ENCODE measurements at regions of chr13 and their contacts with region 1.

Region 1: GRCh38 chr13:27826379-27827353 is 34.4 kb downstream of the GSX1 start:
- DNase-seq: peak; percentile 41 to 62
- ATAC-seq: peak; percentile 85 to 87
- H3K4me3 ChIP-seq: peak overlapping the region in 2 of 4 donors; percentile 22 to 46
- H3K27ac ChIP-seq: no peak overlapping the region
- H3K4me1 ChIP-seq: no peaks in the 10 kb centered on the region
- H3K27me3 ChIP-seq: peaks cover 32 to 41% (median 41%) of the 10 kb centered on the region in 3 donors
- CTCF ChIP-seq: peak; percentile 83 to 92 (median 89)
- POLR2A ChIP-seq: no peak

Region 2: GRCh38 chr13:26985285-26985878 is 841.3 kb before region 1 on chr13:
- in situ Hi-C with region 1: loop called in 2 of 4 experiments (anchors 10 to 25 kb)
- intact Hi-C with region 1: no loop called
- DNase-seq: peak; percentile 36 to 54
- ATAC-seq: peak; percentile 80 to 91
- H3K4me3 ChIP-seq: no peak overlapping the region
- H3K27ac ChIP-seq: no peak overlapping the region
- H3K4me1 ChIP-seq: no peaks in the 10 kb centered on the region
- H3K27me3 ChIP-seq: peaks cover 0 to 4% (median 0%) of the 10 kb centered on the region in 3 donors
- CTCF ChIP-seq: peak; percentile 76 to 84 (median 78)
- POLR2A ChIP-seq: no peak

Region 3: GRCh38 chr13:27367570-27367969 is 459.1 kb before region 1 on chr13:
- in situ Hi-C with region 1: loop called in 3 of 4 experiments (anchors 5 to 10 kb)
- intact Hi-C with region 1: loop called (anchors 1 kb)
- DNase-seq: no peak
- ATAC-seq: no peak
- H3K4me3 ChIP-seq: no peak overlapping the region
- H3K27ac ChIP-seq: no peak overlapping the region
- H3K4me1 ChIP-seq: no peaks in the 10 kb centered on the region
- H3K27me3 ChIP-seq: peaks cover 0 to 7% (median 6%) of the 10 kb centered on the region in 3 donors
- CTCF ChIP-seq: no peak
- POLR2A ChIP-seq: no peak

Region 4: DNA sequence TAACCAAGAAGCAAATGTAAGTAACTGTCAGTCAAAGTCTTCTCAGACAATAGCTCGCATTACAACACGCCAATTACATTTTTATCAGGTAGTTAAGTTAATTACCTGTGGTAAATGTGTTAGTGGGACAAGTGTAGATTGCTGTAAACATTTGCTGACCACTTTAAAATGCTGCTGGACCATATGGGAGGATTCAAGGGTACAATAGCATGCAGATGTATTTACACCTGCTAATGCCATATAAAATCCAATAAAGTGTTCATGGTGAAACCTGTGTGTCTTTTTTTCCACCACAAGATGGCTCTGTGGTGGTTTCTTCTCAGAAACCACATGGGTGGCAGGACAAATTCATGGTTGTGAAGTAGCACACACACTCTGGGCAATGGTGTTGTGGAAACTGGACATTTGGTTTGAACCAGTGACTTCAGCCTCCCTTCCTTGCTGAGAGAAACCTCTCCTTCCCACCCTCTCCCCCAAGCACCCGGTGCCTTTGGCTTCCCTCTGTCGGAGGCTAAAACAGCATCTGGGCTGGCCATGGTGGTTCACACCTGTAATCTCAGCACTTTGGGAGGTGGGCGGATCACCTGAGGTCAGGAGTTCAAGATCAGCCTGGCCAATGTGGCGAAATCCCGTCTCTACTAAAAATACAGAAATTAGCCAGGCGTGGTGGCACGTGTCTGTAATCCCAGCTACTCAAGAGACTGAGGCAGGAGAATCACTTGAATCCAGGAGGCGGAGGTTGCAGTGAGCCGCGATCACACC is 420.3 kb before region 1 on chr13:
- in situ Hi-C with region 1: no loop called
- intact Hi-C with region 1: loop called (anchors 1 kb)
- DNase-seq: no peak
- ATAC-seq: peak; percentile 77 to 80
- H3K4me3 ChIP-seq: no peak overlapping the region
- H3K27ac ChIP-seq: no peak overlapping the region
- H3K4me1 ChIP-seq: peaks cover 6 to 10% of the 10 kb centered on the region in 2 donors
- H3K27me3 ChIP-seq: no peaks in the 10 kb centered on the region
- CTCF ChIP-seq: peak; percentile 39 to 70 (median 61)
- POLR2A ChIP-seq: no peak

Region 5: GRCh38 chr13:27556109-27556508 is 270.6 kb before region 1 on chr13:
- in situ Hi-C with region 1: loop called in 1 of 4 experiments (anchors 25 kb)
- intact Hi-C with region 1: loop called (anchors 1 kb)
- DNase-seq: peak in 1 of 2 donors; percentile 17
- ATAC-seq: peak in 1 of 2 donors; percentile 46
- H3K4me3 ChIP-seq: no peak overlapping the region
- H3K27ac ChIP-seq: no peak overlapping the region
- H3K4me1 ChIP-seq: no peaks in the 10 kb centered on the region
- H3K27me3 ChIP-seq: no peaks in the 10 kb centered on the region
- CTCF ChIP-seq: peak in 2 of 5 experiments; percentile 29 to 35
- POLR2A ChIP-seq: no peak

Region 6: DNA sequence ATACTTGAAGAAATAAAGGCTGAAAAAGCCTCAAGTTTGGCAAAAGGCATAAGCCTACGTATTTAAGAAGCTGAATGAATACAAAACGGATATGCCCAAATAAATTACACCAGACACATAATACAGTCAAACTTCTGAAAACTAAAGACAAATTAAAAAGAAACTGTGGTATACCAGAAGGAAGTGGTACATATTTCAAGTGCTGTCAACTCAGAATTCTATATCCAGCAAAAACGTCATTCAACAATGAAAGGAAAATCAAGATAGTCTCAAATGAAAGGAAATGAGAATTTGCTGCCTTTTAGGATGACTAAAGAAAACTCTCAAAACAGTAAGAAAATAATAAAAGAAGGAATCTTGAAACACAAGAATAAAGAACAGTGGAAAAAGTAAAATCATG is 135.5 kb before region 1 on chr13:
- in situ Hi-C with region 1: no loop called
- intact Hi-C with region 1: no loop called
- DNase-seq: no peak
- ATAC-seq: no peak
- H3K4me3 ChIP-seq: no peak overlapping the region
- H3K27ac ChIP-seq: no peak overlapping the region
- H3K4me1 ChIP-seq: no peaks in the 10 kb centered on the region
- H3K27me3 ChIP-seq: no peaks in the 10 kb centered on the region
- CTCF ChIP-seq: no peak
- POLR2A ChIP-seq: no peak

Region 7: GRCh38 chr13:27997904-27998522 is 171.3 kb after region 1 on chr13:
- in situ Hi-C with region 1: loop called in 1 of 4 experiments (anchors 25 kb)
- intact Hi-C with region 1: no loop called
- DNase-seq: no peak
- ATAC-seq: no peak
- H3K4me3 ChIP-seq: no peak overlapping the region
- H3K27ac ChIP-seq: no peak overlapping the region
- H3K4me1 ChIP-seq: no peaks in the 10 kb centered on the region
- H3K27me3 ChIP-seq: no peaks in the 10 kb centered on the region
- CTCF ChIP-seq: no peak
- POLR2A ChIP-seq: no peak